ENCODE measurements at regions of chr12 and their contacts with region 1.

Region 1: DNA sequence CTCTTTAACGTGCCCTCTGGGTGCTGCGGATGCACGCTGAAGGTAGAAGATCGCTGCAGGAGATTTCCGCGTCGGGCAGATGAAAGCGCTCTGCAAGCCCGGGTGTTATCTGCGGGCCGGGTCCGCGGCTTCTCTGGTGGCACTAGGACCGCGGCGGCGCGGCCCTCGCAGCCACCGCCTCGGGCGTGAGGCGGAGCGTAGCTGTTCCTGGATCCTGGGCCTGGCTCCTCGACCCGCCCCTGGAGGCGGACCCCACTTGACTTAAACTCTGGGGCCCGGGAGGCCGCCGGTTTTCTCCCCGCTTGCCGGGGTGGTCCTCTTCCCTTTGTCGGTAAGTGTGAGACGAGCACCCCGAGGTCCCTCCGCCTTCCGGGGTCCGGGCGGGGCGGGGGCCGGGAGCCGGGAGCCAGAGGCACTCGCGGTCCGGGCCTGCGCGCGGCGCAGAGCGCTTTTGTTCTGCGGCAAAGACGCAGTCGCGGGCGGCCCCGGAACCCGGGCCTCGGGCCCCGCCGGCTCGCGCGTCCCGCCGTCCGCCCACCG is at the start of gene RESF1:
- DNase-seq: peak; percentile 90 to 93
- H3K4me3 ChIP-seq: peak within 1 kb of the TSS; percentile 61 to 74
- H3K27ac ChIP-seq: peak within 1 kb of the TSS; percentile 83 to 91
- H3K4me1 ChIP-seq: peaks cover 0 to 36% (median 25%) of the 10 kb centered on the region in 4 donors
- H3K27me3 ChIP-seq: no peaks in the 10 kb centered on the region
- CTCF ChIP-seq: no peak

Region 2: DNA sequence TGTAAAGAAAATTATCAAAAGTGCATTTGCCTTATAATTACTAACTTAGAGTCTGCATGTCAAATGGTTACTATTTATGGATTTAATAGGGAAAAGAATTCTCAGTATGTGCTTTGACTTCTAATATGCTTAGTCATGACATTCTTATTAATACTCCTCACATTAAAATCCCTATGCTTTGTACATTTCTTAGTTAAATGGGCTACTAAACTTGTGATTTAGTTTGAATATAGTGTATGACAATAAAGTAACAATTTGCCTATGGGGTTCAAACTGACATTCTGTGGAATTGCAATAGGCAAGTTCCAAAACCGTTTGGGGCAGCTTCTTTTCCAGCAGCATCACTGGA is 1813.6 kb before region 1 on chr12:
- intact Hi-C with region 1: no loop called
- DNase-seq: no peak
- H3K4me3 ChIP-seq: no peak overlapping the region
- H3K27ac ChIP-seq: no peak overlapping the region
- H3K4me1 ChIP-seq: peaks cover 0 to 12% (median 2%) of the 10 kb centered on the region in 4 donors
- H3K27me3 ChIP-seq: no peaks in the 10 kb centered on the region
- CTCF ChIP-seq: no peak

Region 3: GRCh38 chr12:31728917-31729640 is 230.2 kb before region 1 on chr12 and contains the start of gene AMN1:
- intact Hi-C with region 1: loop called (anchors 10 kb)
- DNase-seq: peak; percentile 100
- H3K4me3 ChIP-seq: peak within 1 kb of the TSS; percentile 63 to 66
- H3K27ac ChIP-seq: peak within 1 kb of the TSS; percentile 92 to 95
- H3K4me1 ChIP-seq: peaks cover 9 to 60% (median 29%) of the 10 kb centered on the region in 4 donors
- H3K27me3 ChIP-seq: no peaks in the 10 kb centered on the region
- CTCF ChIP-seq: peak; percentile 6 to 35

Region 4: GRCh38 chr12:31896514-31897039 is 62.7 kb before region 1 on chr12:
- intact Hi-C with region 1: no loop called
- DNase-seq: no peak
- H3K4me3 ChIP-seq: no peak overlapping the region
- H3K27ac ChIP-seq: no peak overlapping the region
- H3K4me1 ChIP-seq: no peaks in the 10 kb centered on the region
- H3K27me3 ChIP-seq: no peaks in the 10 kb centered on the region
- CTCF ChIP-seq: no peak

Region 5: DNA sequence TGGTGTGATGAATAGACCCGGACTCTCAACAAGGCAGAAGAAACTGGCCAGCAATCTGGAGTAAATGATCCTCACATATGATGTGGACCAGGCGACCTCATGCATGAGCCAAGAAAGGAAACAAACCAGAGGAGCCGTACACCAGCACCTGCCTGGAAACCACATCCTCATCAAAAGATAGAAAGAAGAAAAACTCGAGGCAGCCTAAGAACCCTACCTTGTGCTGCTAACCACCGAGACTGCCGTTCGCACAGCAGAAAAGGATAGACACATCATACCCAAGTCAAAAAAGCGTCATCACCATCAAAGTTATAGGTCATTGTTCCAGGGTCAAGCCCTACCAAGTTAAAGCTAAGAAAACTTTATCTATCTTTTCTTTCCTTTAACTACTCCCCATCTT is 66.7 kb after region 1 on chr12:
- intact Hi-C with region 1: no loop called
- DNase-seq: no peak
- H3K4me3 ChIP-seq: no peak overlapping the region
- H3K27ac ChIP-seq: no peak overlapping the region
- H3K4me1 ChIP-seq: no peaks in the 10 kb centered on the region
- H3K27me3 ChIP-seq: no peaks in the 10 kb centered on the region
- CTCF ChIP-seq: no peak

Region 6: GRCh38 chr12:32120419-32120818 is 161.2 kb after region 1 on chr12:
- intact Hi-C with region 1: no loop called
- DNase-seq: no peak
- H3K4me3 ChIP-seq: no peak overlapping the region
- H3K27ac ChIP-seq: no peak overlapping the region
- H3K4me1 ChIP-seq: peaks cover 0 to 20% (median 14%) of the 10 kb centered on the region in 4 donors
- H3K27me3 ChIP-seq: no peaks in the 10 kb centered on the region
- CTCF ChIP-seq: no peak